K562 (cell line): ENCODE measurements at regions of chr11 and their contacts with region 1.

Region 1: GRCh38 chr11:82229341-82229740 is 504.3 kb downstream of the FAM181B start:
- DNase-seq: peak in 1 of 4 experiments; percentile 4
- ATAC-seq: no peak
- H3K4me3 ChIP-seq: no peak overlapping the region
- H3K27ac ChIP-seq: no peak overlapping the region
- H3K4me1 ChIP-seq: no peaks in the 10 kb centered on the region
- H3K27me3 ChIP-seq: no peaks in the 10 kb centered on the region
- CTCF ChIP-seq: no peak; a peak in 1 of 6 replicates
- EP300 ChIP-seq: no peak
- POLR2A ChIP-seq: no peak
- RAD21 ChIP-seq: no peak

Region 2: GRCh38 chr11:81644239-81644840 is 585.0 kb before region 1 on chr11:
- CTCF ChIA-PET with region 1: no interaction called
- POLR2A ChIA-PET with region 1: no interaction called
- in situ Hi-C with region 1: no loop called
- intact Hi-C with region 1: loop called (anchors 10 kb)
- DNase-seq: peak; percentile 23 to 53 (median 38)
- ATAC-seq: peak; percentile 56; the same call in 1 of the 3 replicates
- H3K4me3 ChIP-seq: no peak overlapping the region
- H3K27ac ChIP-seq: no peak overlapping the region
- H3K4me1 ChIP-seq: no peaks in the 10 kb centered on the region
- H3K27me3 ChIP-seq: no peaks in the 10 kb centered on the region
- CTCF ChIP-seq: peak; percentile 48 to 53 (median 49); a peak in 3 of 6 replicates
- EP300 ChIP-seq: no peak
- POLR2A ChIP-seq: no peak
- RAD21 ChIP-seq: peak; percentile 33 to 54; a peak in 2 of 4 replicates